Motor neuron (in vitro differentiated cells): ENCODE measurements at regions of chr1 and their contacts with region 1.

Region 1: GRCh38 chr1:201114236-201115131 is 2.3 kb upstream of the CACNA1S start:
- ATAC-seq: peak; percentile 93 to 97 (median 95)
- H3K4me3 ChIP-seq: peak overlapping the region; percentile 42 to 82 (median 46)
- H3K27ac ChIP-seq: peak overlapping the region in 1 of 2 donors; percentile 55
- H3K4me1 ChIP-seq: peaks cover 4 to 16% of the 10 kb centered on the region in 2 donors

Region 2: DNA sequence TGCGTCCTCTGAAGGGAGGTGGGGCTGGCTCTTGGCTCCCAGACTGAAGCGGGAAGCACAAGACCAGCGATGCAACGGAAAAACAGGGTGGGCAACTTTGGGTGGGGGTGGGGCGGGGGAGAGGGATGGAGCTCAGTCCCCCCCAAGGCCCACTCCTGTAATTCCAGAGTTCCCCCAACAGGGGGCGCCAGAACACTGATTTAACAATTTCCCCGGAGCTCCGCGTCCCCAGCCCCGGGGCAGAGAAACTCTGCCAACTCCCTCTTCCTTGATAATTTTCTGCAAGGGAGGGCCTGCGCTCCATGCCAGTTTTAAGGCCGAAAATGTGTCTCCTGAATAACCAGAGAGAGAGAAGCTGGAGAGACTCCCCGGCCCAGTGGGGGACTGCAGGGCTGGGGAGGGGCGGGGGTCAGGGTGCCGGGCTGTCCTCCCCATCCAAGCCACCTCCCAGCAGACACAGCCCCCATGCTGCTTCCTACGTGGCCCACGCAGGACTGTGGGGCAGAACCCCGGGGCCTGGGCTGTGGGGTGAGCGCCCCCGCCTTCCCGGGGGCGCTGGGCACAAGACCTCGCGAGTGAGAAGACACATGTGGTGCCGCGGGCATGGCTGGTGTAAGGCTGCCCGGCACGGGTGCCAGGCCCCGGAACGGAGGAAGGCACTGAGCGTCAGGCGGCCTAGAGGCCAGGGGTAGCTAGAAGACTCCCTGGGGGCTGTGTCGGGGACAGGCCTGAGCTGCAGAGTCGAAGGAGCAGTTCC is 142.4 kb before region 1 on chr1:
- in situ Hi-C with region 1: loop called in 8 of 9 experiments (anchors 10 to 25 kb)
- ATAC-seq: peak; percentile 51 to 83 (median 62)
- H3K4me3 ChIP-seq: no peak overlapping the region
- H3K27ac ChIP-seq: no peak overlapping the region
- H3K4me1 ChIP-seq: peaks cover 0 to 2% of the 10 kb centered on the region in 2 donors

Region 3: DNA sequence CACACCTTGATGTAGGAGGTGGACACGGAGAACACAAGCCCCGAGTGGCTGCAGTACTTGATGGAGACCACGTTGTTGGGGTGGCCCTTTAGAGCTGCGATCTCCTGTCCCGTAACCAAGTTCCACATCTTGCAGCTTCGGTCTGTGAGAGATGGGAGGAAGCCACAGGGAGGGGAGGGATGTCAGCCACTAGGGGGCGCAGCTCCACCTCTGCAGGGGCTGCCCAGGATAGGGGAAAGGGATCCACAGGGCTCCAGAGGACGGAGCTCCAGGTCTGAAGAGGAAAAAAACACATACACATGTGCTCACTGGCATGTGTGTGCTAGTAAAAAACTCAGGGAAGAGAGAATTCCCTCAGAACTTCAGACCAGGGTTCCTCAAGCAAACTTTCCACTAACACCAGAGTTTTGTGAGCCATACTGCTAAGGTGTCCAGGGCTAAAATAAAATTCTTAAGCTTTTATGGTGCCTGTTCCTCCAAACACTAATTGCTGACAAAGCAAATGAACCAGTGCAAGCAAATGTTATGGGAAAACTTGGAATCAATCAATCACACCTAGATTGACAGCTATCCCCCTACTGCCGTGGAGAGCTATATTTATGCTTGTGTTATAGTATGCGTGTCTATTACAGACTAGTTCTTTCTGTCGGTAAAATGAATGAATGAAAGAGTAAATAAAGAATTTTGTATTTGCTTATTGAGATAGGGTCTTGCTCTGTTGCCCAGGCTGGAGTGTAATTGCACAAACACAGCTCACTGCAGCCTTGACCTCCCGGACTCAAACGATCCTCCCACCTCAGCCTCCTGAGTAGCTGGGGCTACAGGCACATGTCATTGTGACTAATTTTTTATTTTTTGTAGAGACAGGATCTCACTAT is 134.7 kb before region 1 on chr1:
- in situ Hi-C with region 1: loop called in 6 of 9 experiments (anchors 10 to 25 kb)
- ATAC-seq: peak; percentile 42 to 92 (median 70)
- H3K4me3 ChIP-seq: no peak overlapping the region
- H3K27ac ChIP-seq: no peak overlapping the region
- H3K4me1 ChIP-seq: no peaks in the 10 kb centered on the region

Region 4: GRCh38 chr1:201259476-201260235 is 145.2 kb after region 1 on chr1:
- in situ Hi-C with region 1: no loop called
- ATAC-seq: peak in 6 of 8 experiments; percentile 19 to 49 (median 39)
- H3K4me3 ChIP-seq: no peak overlapping the region
- H3K27ac ChIP-seq: no peak overlapping the region
- H3K4me1 ChIP-seq: no peaks in the 10 kb centered on the region